ENCODE measurements at regions of chr9 and their contacts with region 1.

Region 1: GRCh38 chr9:19174127-19174912 is 47.0 kb upstream of the PLIN2 start:
- DNase-seq: peak; percentile 30
- ATAC-seq: peak; percentile 95
- H3K4me3 Mint-ChIP-seq: no peak overlapping the region
- H3K27ac Mint-ChIP-seq: no peak overlapping the region
- H3K4me1 Mint-ChIP-seq: peaks cover 5% of the 10 kb centered on the region
- H3K27me3 Mint-ChIP-seq: no peaks in the 10 kb centered on the region
- CTCF ChIP-seq: peak; percentile 30; the same call in 1 of the 2 replicates

Region 2: GRCh38 chr9:19028835-19029451 is 145.4 kb before region 1 on chr9:
- CTCF ChIA-PET with region 1: interaction called, 11 read pairs
- POLR2A ChIA-PET with region 1: no interaction called
- DNase-seq: no peak
- ATAC-seq: peak; percentile 83
- H3K4me3 Mint-ChIP-seq: no peak overlapping the region
- H3K27ac Mint-ChIP-seq: no peak overlapping the region
- H3K4me1 Mint-ChIP-seq: no peaks in the 10 kb centered on the region
- H3K27me3 Mint-ChIP-seq: no peaks in the 10 kb centered on the region; the same call in 1 of the 2 replicates
- CTCF ChIP-seq: peak; percentile 55

Region 3: DNA sequence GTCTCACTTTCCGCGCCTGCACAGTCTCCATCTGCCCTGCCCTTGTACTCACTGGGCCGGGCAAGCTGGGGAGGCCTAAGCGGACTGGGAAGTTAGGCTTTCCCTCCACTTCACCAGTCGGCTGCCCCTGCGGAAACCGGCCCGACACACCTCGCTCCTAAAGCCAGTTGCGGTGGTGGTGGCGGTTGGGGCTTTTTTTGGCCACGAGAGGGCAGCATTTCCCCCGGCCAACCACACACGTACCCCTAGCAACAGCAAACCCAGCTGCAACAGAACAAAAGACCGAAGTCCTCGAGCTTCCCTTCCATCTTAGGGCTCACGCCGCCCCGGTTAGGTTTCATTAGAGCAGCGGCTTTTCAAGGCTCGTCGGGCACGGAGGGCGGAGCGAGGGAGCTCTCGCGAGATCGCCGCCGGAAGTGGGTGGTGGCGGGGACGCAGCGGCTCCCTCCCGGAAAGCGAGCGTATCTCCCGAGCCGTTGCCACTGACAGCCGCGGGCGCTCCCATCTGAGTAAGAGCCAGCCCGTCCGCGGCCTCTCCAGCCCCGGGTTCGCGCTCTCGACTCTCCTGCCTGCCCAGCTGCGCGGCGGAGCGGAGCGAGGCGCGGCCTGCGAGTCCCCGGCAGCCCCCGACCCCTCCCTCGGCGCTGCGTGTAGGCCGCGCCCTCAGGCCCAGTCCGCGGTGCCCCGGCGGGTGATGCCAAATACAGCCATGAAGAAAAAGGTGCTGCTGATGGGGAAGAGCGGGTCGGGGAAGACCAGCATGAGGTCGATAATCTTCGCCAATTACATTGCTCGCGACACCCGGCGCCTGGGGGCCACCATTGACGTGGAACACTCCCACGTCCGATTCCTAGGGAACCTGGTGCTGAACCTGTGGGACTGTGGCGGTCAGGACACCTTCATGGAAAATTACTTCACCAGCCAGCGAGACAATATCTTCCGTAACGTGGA is 125.1 kb before region 1 on chr9 and contains the start of gene RRAGA:
- CTCF ChIA-PET with region 1: interaction called, 37 read pairs
- POLR2A ChIA-PET with region 1: interaction called, 6 read pairs
- DNase-seq: peak; percentile 95
- ATAC-seq: peak; percentile 89
- H3K4me3 Mint-ChIP-seq: peak within 1 kb of the TSS; percentile 87
- H3K27ac Mint-ChIP-seq: peak within 1 kb of the TSS; percentile 97
- H3K4me1 Mint-ChIP-seq: peaks cover 40% of the 10 kb centered on the region
- H3K27me3 Mint-ChIP-seq: no peaks in the 10 kb centered on the region
- CTCF ChIP-seq: peak; percentile 80
- total RNA-seq, gene RRAGA: 48.0 to 50.1 TPM (median 48.7 TPM) in 3 replicates

Region 4: GRCh38 chr9:19085295-19085694 is 89.0 kb before region 1 on chr9:
- CTCF ChIA-PET with region 1: interaction called, 18 read pairs
- POLR2A ChIA-PET with region 1: no interaction called
- DNase-seq: no peak
- ATAC-seq: peak; percentile 71
- H3K4me3 Mint-ChIP-seq: no peak overlapping the region
- H3K27ac Mint-ChIP-seq: no peak overlapping the region
- H3K4me1 Mint-ChIP-seq: no peaks in the 10 kb centered on the region
- H3K27me3 Mint-ChIP-seq: no peaks in the 10 kb centered on the region
- CTCF ChIP-seq: 0 out of 2 replicates have a peak, but pooled peaks have one; percentile 24

Region 5: DNA sequence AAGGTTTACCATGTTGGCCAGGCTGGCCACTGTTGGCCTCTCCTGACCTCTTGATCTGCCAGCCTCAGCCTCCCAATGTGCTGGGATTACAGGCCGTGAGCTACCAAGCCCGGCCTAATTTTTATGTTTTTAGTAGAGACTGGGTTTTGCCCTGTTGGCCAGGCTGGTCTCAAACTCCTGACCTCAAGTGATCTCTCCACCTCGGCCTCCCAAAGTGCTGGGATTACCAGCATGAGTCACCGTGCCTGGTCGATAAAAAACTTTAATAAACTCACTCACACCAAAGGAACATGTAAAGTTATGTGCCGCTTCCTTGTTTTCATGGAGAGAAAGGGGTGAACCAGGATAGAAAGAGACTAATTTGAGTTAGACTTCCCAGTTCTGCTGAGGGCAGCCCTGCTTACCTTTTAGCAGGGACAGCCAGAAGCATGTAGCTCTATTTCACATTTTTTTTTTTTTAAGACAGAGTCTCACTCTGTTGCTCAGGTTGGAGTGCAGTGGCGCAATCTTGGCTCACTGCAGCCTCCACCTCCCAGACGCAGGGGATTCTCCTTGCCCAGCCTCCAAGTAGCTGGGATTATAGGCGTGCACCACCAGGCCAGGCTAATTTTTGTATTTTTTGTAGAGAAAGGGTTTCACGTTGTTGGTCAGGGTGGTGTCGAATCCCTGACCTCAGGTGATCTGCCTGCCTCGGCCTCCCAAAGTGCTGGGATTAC is 60.2 kb before region 1 on chr9:
- CTCF ChIA-PET with region 1: interaction called, 11 read pairs
- POLR2A ChIA-PET with region 1: no interaction called
- DNase-seq: no peak
- ATAC-seq: no peak
- H3K4me3 Mint-ChIP-seq: no peak overlapping the region
- H3K27ac Mint-ChIP-seq: peak overlapping the region; percentile 74
- H3K4me1 Mint-ChIP-seq: peaks cover 13% of the 10 kb centered on the region
- H3K27me3 Mint-ChIP-seq: no peaks in the 10 kb centered on the region
- CTCF ChIP-seq: no peak

Region 6: GRCh38 chr9:19127881-19128500 is 46.3 kb before region 1 on chr9:
- CTCF ChIA-PET with region 1: interaction called, 16 read pairs
- POLR2A ChIA-PET with region 1: no interaction called
- DNase-seq: peak; percentile 57
- ATAC-seq: peak; percentile 10
- H3K4me3 Mint-ChIP-seq: peak overlapping the region; percentile 77
- H3K27ac Mint-ChIP-seq: 0 out of 2 replicates have a peak overlapping the region, but pooled peaks have one; percentile 82
- H3K4me1 Mint-ChIP-seq: peaks cover 45% of the 10 kb centered on the region
- H3K27me3 Mint-ChIP-seq: 0 out of 2 replicates have a peak, but pooled peaks cover 3% of the 10 kb centered on the region
- CTCF ChIP-seq: no peak

Region 7: DNA sequence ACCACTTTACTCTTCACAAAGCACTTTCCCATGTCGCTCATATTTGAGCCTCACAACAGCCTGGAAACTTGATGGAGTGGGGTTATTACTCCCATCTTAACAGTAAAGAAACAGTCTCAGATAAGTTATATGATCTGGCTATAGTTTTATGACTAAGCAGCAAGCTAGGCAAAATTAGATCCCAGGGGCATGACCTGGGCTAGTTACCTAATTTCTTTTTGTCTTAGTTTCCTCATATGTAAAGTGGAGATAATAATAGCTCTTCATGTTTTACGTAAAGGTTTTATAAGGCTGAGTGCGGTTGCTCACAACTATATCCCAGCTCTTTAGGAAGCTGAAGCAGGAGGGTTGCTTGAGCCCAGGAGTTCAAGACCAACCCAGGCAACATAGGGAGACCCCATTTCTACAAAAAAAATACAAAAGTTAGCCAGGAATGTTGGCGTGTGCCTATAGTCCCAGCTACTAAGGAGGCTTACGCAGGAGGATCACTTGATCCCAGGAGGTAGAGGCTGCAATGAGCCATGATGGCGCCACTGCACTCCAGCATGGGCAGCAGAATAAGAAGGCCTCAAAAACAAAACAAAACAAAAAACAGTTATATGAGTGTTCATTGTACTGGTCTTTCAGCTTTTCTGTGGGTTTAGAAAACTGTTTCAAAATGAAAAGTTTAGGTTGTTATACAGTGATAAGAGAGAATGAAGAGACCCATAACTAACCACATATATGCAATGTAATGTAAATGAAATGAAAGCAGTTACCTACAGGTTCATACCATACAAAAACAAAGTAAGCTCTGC is 40.6 kb before region 1 on chr9:
- CTCF ChIA-PET with region 1: interaction called, 20 read pairs
- POLR2A ChIA-PET with region 1: no interaction called
- DNase-seq: no peak
- ATAC-seq: no peak
- H3K4me3 Mint-ChIP-seq: no peak overlapping the region
- H3K27ac Mint-ChIP-seq: no peak overlapping the region; the same call in 1 of the 2 replicates
- H3K4me1 Mint-ChIP-seq: peaks cover 48% of the 10 kb centered on the region
- H3K27me3 Mint-ChIP-seq: 0 out of 2 replicates have a peak, but pooled peaks cover 3% of the 10 kb centered on the region
- CTCF ChIP-seq: no peak

Region 8: GRCh38 chr9:19271076-19271475 is 96.8 kb after region 1 on chr9:
- CTCF ChIA-PET with region 1: no interaction called
- POLR2A ChIA-PET with region 1: no interaction called
- DNase-seq: no peak
- ATAC-seq: no peak
- H3K4me3 Mint-ChIP-seq: no peak overlapping the region
- H3K27ac Mint-ChIP-seq: no peak overlapping the region
- H3K4me1 Mint-ChIP-seq: peaks cover 11% of the 10 kb centered on the region
- H3K27me3 Mint-ChIP-seq: no peaks in the 10 kb centered on the region
- CTCF ChIP-seq: no peak

Region 9: DNA sequence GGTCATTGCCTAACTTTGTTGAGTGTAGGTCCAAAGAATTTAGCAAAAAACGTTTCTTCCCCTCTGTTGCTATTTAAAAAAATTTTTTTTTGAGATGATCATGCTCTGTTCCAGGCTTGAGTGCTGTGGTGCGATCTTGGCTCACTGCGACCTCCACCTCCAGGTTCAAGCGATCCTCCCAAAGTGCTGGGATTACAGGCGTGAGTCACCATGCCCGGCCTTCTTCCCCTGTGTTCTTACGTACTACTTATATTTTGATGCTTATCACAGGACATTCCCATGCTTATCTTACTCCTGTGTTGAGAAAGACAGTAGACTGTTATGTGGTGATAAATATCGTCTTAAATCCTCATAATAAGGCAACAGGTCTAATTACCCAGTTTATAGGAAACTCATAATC is 237.0 kb after region 1 on chr9:
- CTCF ChIA-PET with region 1: no interaction called
- POLR2A ChIA-PET with region 1: no interaction called
- DNase-seq: no peak
- ATAC-seq: no peak
- H3K4me3 Mint-ChIP-seq: no peak overlapping the region
- H3K27ac Mint-ChIP-seq: no peak overlapping the region
- H3K4me1 Mint-ChIP-seq: peaks cover 29% of the 10 kb centered on the region
- H3K27me3 Mint-ChIP-seq: peaks cover 17% of the 10 kb centered on the region
- CTCF ChIP-seq: no peak

Measured in WTC11 (cell line).